ENCODE measurements at regions of chr1 and their contacts with region 1.

Region 1: GRCh38 chr1:111990878-111991718 is 1.6 kb upstream of the KCND3 start:
- DNase-seq: peak; percentile 51 to 86
- H3K4me3 ChIP-seq: peak overlapping the region; percentile 67 to 85
- H3K27ac ChIP-seq: peak overlapping the region; percentile 74 to 79
- H3K4me1 ChIP-seq: peaks cover 0 to 43% (median 24%) of the 10 kb centered on the region in 4 donors
- H3K27me3 ChIP-seq: no peaks in the 10 kb centered on the region
- CTCF ChIP-seq: peak; percentile 35 to 39

Region 2: DNA sequence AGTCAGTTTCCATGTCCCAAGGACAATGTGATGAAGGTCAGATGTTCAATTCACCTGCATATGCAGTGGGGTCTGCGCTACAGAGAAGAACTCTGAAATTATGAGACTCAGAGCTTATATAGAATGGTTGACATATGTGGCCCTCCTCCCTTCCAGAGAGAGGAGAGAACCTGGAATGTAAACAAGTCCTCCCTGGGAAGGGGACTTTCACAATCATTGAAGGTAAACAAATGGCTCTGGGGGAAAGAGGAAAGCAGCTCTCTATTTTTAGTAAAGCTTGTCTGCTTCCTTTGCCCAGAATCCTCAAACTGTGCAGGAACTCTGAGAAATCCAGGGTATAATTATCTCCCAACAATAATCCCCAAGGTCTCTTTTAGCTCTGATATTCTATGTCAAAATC is 573.3 kb before region 1 on chr1:
- intact Hi-C with region 1: no loop called
- DNase-seq: no peak
- H3K4me3 ChIP-seq: no peak overlapping the region
- H3K27ac ChIP-seq: no peak overlapping the region
- H3K4me1 ChIP-seq: peaks cover 0 to 2% (median 0%) of the 10 kb centered on the region in 4 donors
- H3K27me3 ChIP-seq: no peaks in the 10 kb centered on the region
- CTCF ChIP-seq: no peak

Region 3: DNA sequence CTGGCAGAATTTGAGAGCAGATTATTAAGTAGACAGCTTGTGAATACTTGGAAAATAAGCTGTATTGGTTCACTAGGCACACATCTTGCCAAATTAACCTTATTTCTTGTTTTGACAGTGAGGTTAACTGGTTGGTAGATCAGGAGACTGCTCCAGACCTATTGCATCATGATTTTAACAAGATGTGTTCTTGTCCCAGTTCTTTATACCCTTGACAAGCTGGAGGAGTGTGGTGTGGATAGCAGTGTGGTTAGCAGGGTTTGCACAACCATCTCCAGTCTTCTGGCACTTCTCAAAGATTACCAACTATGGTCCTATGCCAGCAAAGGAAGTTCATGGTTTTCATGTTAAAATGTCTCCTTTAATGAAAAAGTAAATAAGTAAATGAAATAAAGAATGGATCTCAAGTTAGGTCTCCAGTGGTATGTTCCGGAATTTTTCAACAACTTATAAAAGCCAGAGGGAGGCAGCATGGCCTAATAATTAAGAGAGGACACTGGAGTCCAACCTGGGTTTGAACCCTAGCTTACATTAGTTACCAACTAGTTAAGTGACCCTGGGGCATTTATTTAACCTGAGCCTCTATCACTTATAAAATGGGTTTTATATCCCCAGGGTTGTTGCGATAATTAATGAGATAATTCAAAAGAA is 201.3 kb before region 1 on chr1:
- intact Hi-C with region 1: loop called (anchors 10 kb)
- DNase-seq: peak in 1 of 2 donors; percentile 10
- H3K4me3 ChIP-seq: no peak overlapping the region
- H3K27ac ChIP-seq: no peak overlapping the region
- H3K4me1 ChIP-seq: no peaks in the 10 kb centered on the region
- H3K27me3 ChIP-seq: no peaks in the 10 kb centered on the region
- CTCF ChIP-seq: peak; percentile 11 to 38

Region 4: DNA sequence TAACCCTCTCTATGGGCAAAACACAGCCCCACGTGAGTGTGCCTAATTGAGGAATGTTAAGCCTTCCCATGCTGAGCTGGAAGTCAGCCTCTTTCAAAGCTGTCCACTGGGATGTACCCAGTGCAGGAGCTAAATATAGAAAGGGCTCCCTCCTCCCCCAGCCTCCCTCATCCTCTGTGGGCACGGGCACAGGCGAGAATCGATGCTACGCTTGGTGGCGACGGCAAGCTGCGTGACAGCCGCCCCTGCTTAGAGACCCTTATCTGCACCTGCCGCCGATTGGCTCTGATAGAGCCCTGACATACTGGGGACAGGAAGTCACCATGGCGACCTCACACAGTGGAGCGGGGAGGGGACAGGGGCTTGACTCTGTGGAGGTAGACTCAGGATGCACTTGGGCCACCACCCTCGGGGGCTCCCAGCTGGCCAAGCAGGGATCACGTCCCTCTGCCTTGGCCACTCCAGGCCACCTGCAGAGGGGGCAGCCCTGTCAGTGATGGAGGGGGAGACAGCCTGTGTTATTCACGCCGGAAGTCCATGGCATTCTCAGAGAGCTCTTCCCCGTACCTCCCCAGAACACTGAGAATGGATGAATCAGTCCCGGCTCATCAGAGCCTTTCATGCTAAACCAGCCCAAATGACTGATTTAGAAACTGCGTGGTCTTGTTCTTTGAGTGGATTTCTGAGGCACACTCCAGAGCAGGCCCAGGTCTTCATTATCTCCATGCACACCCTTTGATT is 86.5 kb before region 1 on chr1:
- intact Hi-C with region 1: loop called (anchors 10 kb)
- DNase-seq: no peak
- H3K4me3 ChIP-seq: peak overlapping the region; percentile 20 to 21
- H3K27ac ChIP-seq: peak overlapping the region; percentile 10 to 57
- H3K4me1 ChIP-seq: peaks cover 0 to 19% (median 6%) of the 10 kb centered on the region in 4 donors
- H3K27me3 ChIP-seq: no peaks in the 10 kb centered on the region
- CTCF ChIP-seq: no peak

Region 5: DNA sequence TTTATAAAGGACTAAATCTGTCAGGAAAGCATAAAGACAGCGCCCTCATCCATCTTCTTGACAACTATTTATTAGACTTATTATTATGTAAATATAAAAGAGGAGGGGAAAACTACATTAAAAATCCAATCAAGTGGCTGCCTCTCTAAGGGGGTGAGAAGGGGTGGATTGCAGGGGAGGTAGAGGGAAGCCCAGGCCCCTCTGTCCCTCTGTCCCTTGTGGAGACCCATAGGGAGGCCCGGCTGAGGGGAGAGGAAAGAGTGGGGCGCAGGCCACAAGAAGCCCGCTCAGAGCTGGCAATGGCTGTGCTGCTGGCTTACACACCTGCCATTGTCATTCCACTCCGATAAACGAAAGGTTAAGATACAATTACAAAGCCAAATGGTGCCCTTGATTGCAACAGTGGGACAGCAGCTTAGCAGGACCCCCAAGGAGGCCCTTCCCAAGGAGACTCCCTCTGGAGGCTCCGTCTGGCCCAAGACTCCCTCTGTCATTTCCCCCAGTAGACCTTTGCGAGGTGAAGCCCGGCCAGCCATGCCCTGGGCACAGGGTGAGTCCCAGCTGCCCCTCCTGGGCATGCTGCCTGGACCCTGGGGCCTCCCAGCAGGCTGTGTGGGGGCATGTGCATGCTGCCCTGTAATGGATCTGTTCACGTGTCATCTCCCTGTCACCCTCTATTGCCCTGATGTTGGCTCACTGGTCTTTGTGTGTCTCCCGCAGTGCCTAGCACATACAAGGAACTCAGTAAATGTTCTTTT is 46.9 kb before region 1 on chr1:
- intact Hi-C with region 1: no loop called
- DNase-seq: no peak
- H3K4me3 ChIP-seq: no peak overlapping the region
- H3K27ac ChIP-seq: no peak overlapping the region
- H3K4me1 ChIP-seq: peaks cover 0 to 17% (median 9%) of the 10 kb centered on the region in 4 donors
- H3K27me3 ChIP-seq: no peaks in the 10 kb centered on the region
- CTCF ChIP-seq: no peak

Region 6: GRCh38 chr1:112040891-112041740 is 50.0 kb after region 1 on chr1:
- intact Hi-C with region 1: no loop called
- DNase-seq: no peak
- H3K4me3 ChIP-seq: no peak overlapping the region
- H3K27ac ChIP-seq: no peak overlapping the region
- H3K4me1 ChIP-seq: no peaks in the 10 kb centered on the region
- H3K27me3 ChIP-seq: peaks cover 0 to 7% of the 10 kb centered on the region in 2 donors
- CTCF ChIP-seq: no peak

Measured in tibial artery (tissue), 4 donors.